WTC11 (cell line): ENCODE measurements at regions of chr11 and their contacts with region 1.

Region 1: GRCh38 chr11:67382276-67383136 is 9.1 kb upstream of the CLCF1 start:
- DNase-seq: peak; percentile 90
- ATAC-seq: peak; percentile 85
- H3K4me3 Mint-ChIP-seq: no peak overlapping the region
- H3K27ac Mint-ChIP-seq: no peak overlapping the region; the same call in 1 of the 2 replicates
- H3K4me1 Mint-ChIP-seq: peaks cover 17% of the 10 kb centered on the region
- H3K27me3 Mint-ChIP-seq: peaks cover 52% of the 10 kb centered on the region
- CTCF ChIP-seq: peak; percentile 90

Region 2: GRCh38 chr11:66530927-66531709 is 851.4 kb before region 1 on chr11:
- CTCF ChIA-PET with region 1: no interaction called
- POLR2A ChIA-PET with region 1: no interaction called
- DNase-seq: no peak
- ATAC-seq: no peak
- H3K4me3 Mint-ChIP-seq: no peak overlapping the region
- H3K27ac Mint-ChIP-seq: no peak overlapping the region
- H3K4me1 Mint-ChIP-seq: peaks cover 3% of the 10 kb centered on the region
- H3K27me3 Mint-ChIP-seq: no peaks in the 10 kb centered on the region
- CTCF ChIP-seq: no peak

Region 3: GRCh38 chr11:67310221-67311050 is 72.1 kb before region 1 on chr11:
- CTCF ChIA-PET with region 1: no interaction called
- POLR2A ChIA-PET with region 1: no interaction called
- DNase-seq: no peak
- ATAC-seq: no peak
- H3K4me3 Mint-ChIP-seq: no peak overlapping the region
- H3K27ac Mint-ChIP-seq: no peak overlapping the region
- H3K4me1 Mint-ChIP-seq: no peaks in the 10 kb centered on the region
- H3K27me3 Mint-ChIP-seq: peaks cover 9% of the 10 kb centered on the region
- CTCF ChIP-seq: no peak

Region 4: DNA sequence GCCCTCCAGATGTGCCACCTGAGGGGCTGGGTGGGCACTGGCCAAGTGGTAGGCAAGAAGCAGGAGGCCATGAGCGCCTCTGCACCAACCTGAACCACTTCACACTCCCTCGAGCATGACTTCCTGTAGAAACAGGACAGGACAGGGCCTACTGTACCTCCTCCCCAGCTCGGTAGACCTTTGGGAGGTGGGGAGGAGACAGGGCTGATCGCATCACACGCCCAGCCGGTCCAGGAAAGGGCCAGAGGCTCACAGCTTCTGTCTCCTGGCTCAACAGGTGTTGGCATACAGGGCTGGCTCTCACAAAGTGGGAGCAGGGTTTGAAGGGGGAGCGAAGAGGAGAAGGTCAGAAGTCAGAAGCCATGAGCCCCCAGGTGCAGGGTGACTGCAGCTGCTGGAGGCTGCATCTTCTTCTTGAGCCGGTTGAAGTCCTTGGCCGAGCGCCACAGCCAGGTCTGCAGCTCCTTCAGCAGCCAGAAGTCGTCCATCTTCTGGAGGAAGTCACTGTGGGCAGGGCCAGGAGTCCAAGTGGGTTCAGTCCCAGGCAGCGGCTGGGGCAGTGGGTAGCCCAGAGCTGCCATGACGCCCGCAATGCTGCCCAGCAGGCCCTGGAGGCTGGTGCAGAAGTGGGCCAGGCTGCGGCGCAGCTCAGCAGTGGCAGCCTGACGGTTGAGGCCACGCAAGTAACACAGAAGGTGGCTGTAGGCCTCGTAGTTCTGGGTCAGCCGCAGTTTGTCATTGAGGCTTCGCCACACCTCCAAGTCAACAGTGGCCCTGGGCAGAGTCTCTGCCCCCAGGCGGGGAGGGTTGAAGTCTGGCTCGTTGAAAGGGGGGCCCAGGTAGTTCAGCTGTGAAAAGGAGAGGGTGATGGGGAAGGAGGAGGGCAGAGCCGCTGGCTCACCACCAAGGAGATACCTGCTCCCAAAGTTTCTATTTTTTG is 17.5 kb before region 1 on chr11:
- CTCF ChIA-PET with region 1: interaction called, 117 read pairs
- POLR2A ChIA-PET with region 1: interaction called, 3 read pairs
- DNase-seq: no peak
- ATAC-seq: no peak
- H3K4me3 Mint-ChIP-seq: no peak overlapping the region
- H3K27ac Mint-ChIP-seq: 0 out of 2 replicates have a peak overlapping the region, but pooled peaks have one; percentile 55
- H3K4me1 Mint-ChIP-seq: peaks cover 15% of the 10 kb centered on the region
- H3K27me3 Mint-ChIP-seq: peaks cover 73% of the 10 kb centered on the region
- CTCF ChIP-seq: no peak